ENCODE measurements at regions of chr18 and their contacts with region 1.

Region 1: DNA sequence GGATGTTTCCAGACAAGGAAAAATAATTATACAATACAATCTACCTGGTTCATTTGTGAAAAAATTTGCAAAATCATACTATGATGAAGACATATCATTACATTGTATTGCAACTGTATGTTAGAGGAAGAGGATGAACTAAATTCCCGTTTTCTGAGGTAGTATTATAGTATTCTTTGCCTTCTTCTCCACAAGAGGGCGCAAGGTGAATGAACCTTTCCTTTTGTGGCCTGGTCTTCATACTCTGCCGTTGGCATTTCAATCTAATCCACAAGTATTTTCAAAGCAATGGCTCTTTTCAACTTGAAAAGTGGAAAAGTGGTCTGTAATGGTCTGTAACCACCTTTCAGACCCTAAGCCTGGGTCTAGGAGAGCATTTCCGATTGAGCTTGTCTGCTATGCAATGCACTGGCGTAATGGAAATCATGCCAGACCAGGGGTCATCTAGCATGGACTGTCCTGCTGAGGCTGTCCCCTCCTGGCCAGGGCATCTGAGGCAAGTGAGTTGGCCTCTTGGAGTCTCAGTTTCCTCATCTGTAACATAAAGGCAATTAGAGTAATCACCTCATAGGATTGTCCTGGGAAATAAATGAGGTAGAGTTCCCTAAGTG is 30.8 kb upstream of the ZNF396 start:
- DNase-seq: peak; percentile 69
- ATAC-seq: peak; percentile 78
- H3K4me3 ChIP-seq: peak overlapping the region; percentile 0 to 61 (median 51); a peak in 4 of 6 replicates
- H3K27ac ChIP-seq: no peak overlapping the region
- H3K4me1 ChIP-seq: peaks cover 22% of the 10 kb centered on the region
- H3K27me3 ChIP-seq: no peaks in the 10 kb centered on the region
- CTCF ChIP-seq: peak; percentile 89
- EP300 ChIP-seq: no peak
- POLR2A ChIP-seq: no peak
- RAD21 ChIP-seq: peak; percentile 87; the same call in 1 of the 2 replicates

Region 2: GRCh38 chr18:35231052-35231451 is 176.9 kb before region 1 on chr18:
- CTCF ChIA-PET with region 1: interaction called, 3 read pairs
- POLR2A ChIA-PET with region 1: no interaction called
- in situ Hi-C with region 1: no loop called
- intact Hi-C with region 1: loop called (anchors 1 kb)
- DNase-seq: peak; percentile 87
- ATAC-seq: peak; percentile 97
- H3K4me3 ChIP-seq: peak overlapping the region in 2 of 3 experiments; percentile 19 to 28; a peak in 2 of 6 replicates
- H3K27ac ChIP-seq: no peak overlapping the region
- H3K4me1 ChIP-seq: no peaks in the 10 kb centered on the region
- H3K27me3 ChIP-seq: no peaks in the 10 kb centered on the region
- CTCF ChIP-seq: peak; percentile 90
- EP300 ChIP-seq: 0 out of 4 replicates have a peak, but pooled peaks of 1 of the 2 experiments have one; percentile 15
- POLR2A ChIP-seq: no peak
- RAD21 ChIP-seq: peak; percentile 85

Region 3: DNA sequence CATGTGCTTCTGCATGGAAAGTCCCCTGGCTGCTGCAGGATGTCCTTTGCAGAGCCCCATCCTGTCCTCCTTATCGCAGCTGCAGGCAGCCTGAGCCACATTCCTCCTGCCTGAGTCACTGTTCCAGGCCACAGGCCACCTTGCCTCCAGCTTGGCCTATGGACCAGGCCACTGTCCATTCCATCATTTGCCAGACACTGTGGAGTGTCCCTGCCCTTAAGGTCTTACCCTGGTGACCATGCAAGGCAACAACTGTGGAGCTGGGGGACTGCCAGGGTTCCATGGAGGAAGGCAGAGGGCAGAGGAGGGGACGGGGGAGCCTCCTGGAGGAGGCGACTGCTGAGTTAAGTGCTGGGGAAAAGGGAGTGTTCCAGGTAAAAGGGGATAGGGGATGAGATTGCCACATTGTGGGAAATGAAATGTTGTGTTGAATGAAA is 51.0 kb after region 1 on chr18:
- CTCF ChIA-PET with region 1: no interaction called
- POLR2A ChIA-PET with region 1: no interaction called
- in situ Hi-C with region 1: no loop called
- intact Hi-C with region 1: loop called (anchors 1 kb)
- DNase-seq: peak; percentile 86
- ATAC-seq: peak; percentile 99
- H3K4me3 ChIP-seq: no peak overlapping the region
- H3K27ac ChIP-seq: no peak overlapping the region
- H3K4me1 ChIP-seq: peaks cover 35% of the 10 kb centered on the region
- H3K27me3 ChIP-seq: no peaks in the 10 kb centered on the region
- CTCF ChIP-seq: peak; percentile 28; the same call in 1 of the 2 replicates
- EP300 ChIP-seq: peak in 1 of 2 experiments; percentile 42; a peak in 2 of 4 replicates
- POLR2A ChIP-seq: no peak
- RAD21 ChIP-seq: no peak

Region 4: GRCh38 chr18:35478520-35479435 is 70.8 kb after region 1 on chr18:
- CTCF ChIA-PET with region 1: no interaction called
- POLR2A ChIA-PET with region 1: interaction called, 6 read pairs
- in situ Hi-C with region 1: no loop called
- intact Hi-C with region 1: loop called (anchors 1 kb)
- DNase-seq: peak; percentile 97
- ATAC-seq: peak; percentile 92
- H3K4me3 ChIP-seq: peak overlapping the region in 1 of 3 experiments; percentile 49; a peak in 1 of 6 replicates
- H3K27ac ChIP-seq: peak overlapping the region; percentile 85
- H3K4me1 ChIP-seq: peaks cover 71% of the 10 kb centered on the region
- H3K27me3 ChIP-seq: no peaks in the 10 kb centered on the region; a peak in 1 of 5 replicates
- CTCF ChIP-seq: no peak
- EP300 ChIP-seq: peak in 1 of 2 experiments; percentile 53; a peak in 2 of 4 replicates
- POLR2A ChIP-seq: peak; percentile 54 to 83
- RAD21 ChIP-seq: no peak

Region 5: GRCh38 chr18:35513181-35513936 is 105.4 kb after region 1 on chr18:
- CTCF ChIA-PET with region 1: interaction called, 26 read pairs
- POLR2A ChIA-PET with region 1: no interaction called
- in situ Hi-C with region 1: loop called (anchors 5 kb)
- intact Hi-C with region 1: loop called (anchors 1 kb)
- DNase-seq: no peak
- ATAC-seq: peak; percentile 23; the same call in 1 of the 3 replicates
- H3K4me3 ChIP-seq: no peak overlapping the region
- H3K27ac ChIP-seq: no peak overlapping the region
- H3K4me1 ChIP-seq: peaks cover 12% of the 10 kb centered on the region
- H3K27me3 ChIP-seq: peaks cover 0 to 3% of the 10 kb centered on the region in 2 experiments; a peak in 1 of 5 replicates
- CTCF ChIP-seq: no peak
- EP300 ChIP-seq: no peak
- POLR2A ChIP-seq: no peak
- RAD21 ChIP-seq: no peak

Region 6: GRCh38 chr18:35580701-35581539 is 172.9 kb after region 1 on chr18:
- CTCF ChIA-PET with region 1: no interaction called
- POLR2A ChIA-PET with region 1: interaction called, 3 read pairs
- in situ Hi-C with region 1: no loop called
- intact Hi-C with region 1: loop called (anchors 2 kb)
- DNase-seq: peak; percentile 23
- ATAC-seq: peak; percentile 88
- H3K4me3 ChIP-seq: peak overlapping the region; percentile 66 to 79 (median 67); a peak in 5 of 6 replicates
- H3K27ac ChIP-seq: peak overlapping the region; percentile 62
- H3K4me1 ChIP-seq: peaks cover 16% of the 10 kb centered on the region
- H3K27me3 ChIP-seq: 0 out of 5 replicates have a peak, but pooled peaks cover 0 to 3% of the 10 kb centered on the region in 2 experiments
- CTCF ChIP-seq: no peak
- EP300 ChIP-seq: no peak
- POLR2A ChIP-seq: no peak
- RAD21 ChIP-seq: no peak; the same call in none of the 2 replicates

Region 7: DNA sequence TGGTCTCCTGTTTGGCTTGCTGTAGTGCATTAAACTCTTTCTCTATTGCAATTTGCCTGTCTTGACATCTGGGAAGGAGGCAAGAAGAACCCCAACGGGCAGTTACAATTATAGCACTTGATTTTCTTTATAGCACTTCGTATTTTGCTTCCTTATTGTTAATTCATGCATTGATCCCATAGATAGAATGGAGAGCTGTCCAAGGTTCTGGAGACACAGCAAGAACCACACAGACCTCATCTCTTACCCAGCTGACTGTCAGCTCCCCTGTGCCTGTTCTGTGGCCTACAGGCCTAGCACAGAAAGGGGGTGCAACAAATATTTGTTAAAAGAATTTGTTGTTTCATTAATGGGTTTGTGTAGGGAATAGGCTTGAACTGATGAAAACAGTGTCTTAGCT is 367.9 kb after region 1 on chr18:
- CTCF ChIA-PET with region 1: no interaction called
- POLR2A ChIA-PET with region 1: no interaction called
- in situ Hi-C with region 1: no loop called
- intact Hi-C with region 1: loop called (anchors 2 kb)
- DNase-seq: no peak
- ATAC-seq: no peak
- H3K4me3 ChIP-seq: no peak overlapping the region
- H3K27ac ChIP-seq: no peak overlapping the region
- H3K4me1 ChIP-seq: no peaks in the 10 kb centered on the region
- H3K27me3 ChIP-seq: no peaks in the 10 kb centered on the region; a peak in 2 of 5 replicates
- CTCF ChIP-seq: no peak
- EP300 ChIP-seq: no peak
- POLR2A ChIP-seq: no peak
- RAD21 ChIP-seq: no peak

Measured in HepG2 (cell line).